ENCODE measurements at regions of chr2 and their contacts with region 1.

Region 1: DNA sequence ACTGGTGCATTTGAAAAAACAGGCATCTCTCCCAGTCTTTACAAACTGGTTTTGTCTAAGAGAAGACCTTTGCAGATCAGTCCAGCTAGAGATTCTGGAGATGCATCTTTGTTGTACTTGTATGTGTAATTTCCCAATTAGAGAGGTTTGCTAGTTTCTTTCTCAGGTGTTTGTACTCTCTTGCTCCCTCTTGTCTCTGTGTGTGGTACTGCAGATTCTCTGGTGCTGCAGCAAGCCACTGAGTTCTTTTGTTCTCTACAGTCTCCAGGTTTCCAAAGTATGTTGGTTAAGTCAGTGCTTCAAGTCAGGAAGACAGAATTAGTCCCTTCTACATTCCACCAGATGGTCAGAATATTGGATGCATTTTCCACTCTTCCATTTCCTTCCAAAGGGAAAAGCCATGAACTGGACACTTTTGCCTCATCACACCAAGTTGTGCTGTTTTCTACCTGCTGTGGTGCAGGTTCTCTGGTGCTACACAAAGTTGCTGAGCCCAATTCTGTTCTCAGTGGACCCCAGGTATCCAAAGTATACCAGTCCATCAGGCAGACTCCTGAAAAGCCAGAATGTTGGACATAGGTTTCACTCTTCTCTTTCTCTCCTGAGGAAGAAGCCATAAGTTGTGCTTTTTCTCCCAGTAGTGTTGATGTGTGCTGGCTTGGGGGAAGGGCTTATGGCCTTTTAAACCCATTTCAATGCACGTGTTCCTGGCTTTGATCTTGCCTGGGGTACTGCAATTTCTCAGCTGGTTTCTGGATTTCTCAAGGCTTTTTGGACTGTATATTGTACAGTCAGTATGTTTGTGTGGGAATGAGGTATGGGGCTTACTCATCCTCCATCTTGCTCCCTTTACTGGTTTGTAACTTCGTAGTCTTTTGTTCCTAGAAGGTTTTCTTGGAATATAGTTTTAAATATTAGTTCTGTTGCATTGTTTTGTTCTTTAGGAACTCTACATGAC is 29.8 kb downstream of the EPC2 start:
- DNase-seq: no peak
- ATAC-seq: no peak

Region 2: GRCh38 chr2:149119368-149119767 is 445.0 kb after region 1 on chr2:
- intact Hi-C with region 1: loop called (anchors 5 kb)
- DNase-seq: no peak
- ATAC-seq: no peak

Measured in sciatic nerve (tissue), 2 donors.